ENCODE measurements at regions of chr12 and their contacts with region 1.

Region 1: GRCh38 chr12:22275846-22276245 is 58.7 kb downstream of the ST8SIA1 start:
- DNase-seq: peak; percentile 63 to 84 (median 77)
- ATAC-seq: peak; percentile 86 to 98 (median 98)
- H3K4me3 ChIP-seq: no peak overlapping the region
- H3K27ac ChIP-seq: peak overlapping the region in 10 of 12 donors; percentile 21 to 83 (median 56)
- H3K4me1 ChIP-seq: peaks cover 0 to 32% (median 0%) of the 10 kb centered on the region in 12 donors
- H3K27me3 ChIP-seq: no peaks in the 10 kb centered on the region
- CTCF ChIP-seq: no peak
- POLR2A ChIP-seq: no peak

Region 2: GRCh38 chr12:22160396-22161003 is 115.3 kb before region 1 on chr12:
- intact Hi-C with region 1: no loop called
- DNase-seq: no peak
- ATAC-seq: no peak
- H3K4me3 ChIP-seq: no peak overlapping the region
- H3K27ac ChIP-seq: no peak overlapping the region
- H3K4me1 ChIP-seq: peaks cover 0 to 4% (median 0%) of the 10 kb centered on the region in 12 donors
- H3K27me3 ChIP-seq: no peaks in the 10 kb centered on the region
- CTCF ChIP-seq: no peak
- POLR2A ChIP-seq: no peak

Region 3: GRCh38 chr12:22204391-22204790 is 71.5 kb before region 1 on chr12:
- intact Hi-C with region 1: no loop called
- DNase-seq: no peak
- ATAC-seq: no peak
- H3K4me3 ChIP-seq: no peak overlapping the region
- H3K27ac ChIP-seq: no peak overlapping the region
- H3K4me1 ChIP-seq: no peaks in the 10 kb centered on the region
- H3K27me3 ChIP-seq: no peaks in the 10 kb centered on the region
- CTCF ChIP-seq: no peak
- POLR2A ChIP-seq: no peak

Region 4: DNA sequence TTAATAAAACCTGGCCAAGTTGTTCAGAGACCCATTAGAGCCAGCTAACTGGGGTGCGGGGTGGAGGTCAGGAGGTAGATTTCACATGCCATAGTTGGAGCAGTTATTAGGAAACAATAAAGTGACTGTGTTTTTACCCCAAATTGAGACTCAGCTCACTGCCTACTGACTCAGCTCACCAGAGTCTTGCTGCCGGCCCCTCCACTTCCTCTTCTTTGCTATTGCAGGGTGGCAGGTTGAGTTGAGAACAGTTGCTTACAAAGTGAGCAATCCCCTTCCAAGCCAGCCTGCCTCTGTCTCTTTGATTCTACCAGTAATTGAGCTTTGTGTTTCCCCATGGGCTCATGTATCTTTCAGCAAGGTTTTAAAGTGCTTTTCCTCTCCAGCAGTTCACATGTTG is 45.8 kb after region 1 on chr12:
- intact Hi-C with region 1: loop called in 1 of 10 experiments (anchors 10 kb)
- DNase-seq: no peak
- ATAC-seq: peak in 2 of 4 donors; percentile 58 to 60
- H3K4me3 ChIP-seq: no peak overlapping the region
- H3K27ac ChIP-seq: peak overlapping the region in 1 of 12 donors; percentile 39
- H3K4me1 ChIP-seq: peaks cover 0 to 23% (median 0%) of the 10 kb centered on the region in 12 donors
- H3K27me3 ChIP-seq: no peaks in the 10 kb centered on the region
- CTCF ChIP-seq: no peak
- POLR2A ChIP-seq: no peak

Measured in heart left ventricle (tissue), 16 donors.